ENCODE measurements at regions of chr14 and their contacts with region 1.

Region 1: DNA sequence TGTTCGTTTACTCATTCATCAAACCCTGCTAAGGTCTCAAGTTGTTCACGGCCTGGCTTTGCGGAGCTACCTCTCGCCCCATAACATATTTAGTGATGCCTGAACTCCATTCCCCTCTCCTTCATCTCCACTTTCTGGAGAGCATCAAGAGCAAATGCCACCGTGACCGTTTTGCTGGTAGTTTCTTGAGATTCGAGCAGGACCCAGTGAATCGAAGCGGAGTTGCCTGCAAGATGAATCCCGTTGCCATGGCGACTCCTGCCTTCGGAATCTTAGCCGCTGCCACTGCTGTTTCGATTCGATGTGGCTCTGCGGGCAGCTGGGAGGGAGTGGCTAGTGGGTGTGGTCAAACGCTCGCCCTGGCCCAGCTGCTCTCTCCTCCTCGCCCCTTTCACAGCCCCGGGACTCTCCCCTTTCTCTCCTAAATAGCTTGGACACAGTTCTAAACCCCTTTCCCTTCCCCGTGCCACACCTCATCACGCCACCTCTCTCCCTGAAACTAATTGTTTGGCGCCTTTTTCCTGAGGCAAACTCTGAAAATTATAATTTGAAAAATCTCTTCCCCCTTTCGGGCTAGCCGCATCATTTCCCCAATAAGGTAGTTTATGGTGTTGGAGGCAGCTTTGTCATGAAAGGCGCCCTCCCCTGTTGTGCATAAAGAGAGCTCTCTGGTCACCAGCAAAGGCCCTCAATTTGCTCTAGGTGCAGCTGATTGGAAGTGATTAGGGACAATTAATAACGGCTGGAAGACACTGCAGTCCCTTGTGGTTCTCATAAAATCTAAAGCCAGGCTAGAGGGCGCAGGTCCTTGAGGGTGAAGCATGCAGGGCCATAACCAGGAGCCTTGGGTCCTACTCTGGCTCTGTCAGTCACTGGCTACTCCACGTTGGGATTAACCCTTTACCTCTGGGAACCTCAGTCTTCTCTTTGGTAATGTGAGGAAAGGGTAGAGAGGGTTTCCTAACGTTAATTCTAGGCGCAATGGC is 1.6 kb downstream of the DAAM1 start:
- DNase-seq: peak; percentile 91
- ATAC-seq: peak; percentile 47

Region 2: DNA sequence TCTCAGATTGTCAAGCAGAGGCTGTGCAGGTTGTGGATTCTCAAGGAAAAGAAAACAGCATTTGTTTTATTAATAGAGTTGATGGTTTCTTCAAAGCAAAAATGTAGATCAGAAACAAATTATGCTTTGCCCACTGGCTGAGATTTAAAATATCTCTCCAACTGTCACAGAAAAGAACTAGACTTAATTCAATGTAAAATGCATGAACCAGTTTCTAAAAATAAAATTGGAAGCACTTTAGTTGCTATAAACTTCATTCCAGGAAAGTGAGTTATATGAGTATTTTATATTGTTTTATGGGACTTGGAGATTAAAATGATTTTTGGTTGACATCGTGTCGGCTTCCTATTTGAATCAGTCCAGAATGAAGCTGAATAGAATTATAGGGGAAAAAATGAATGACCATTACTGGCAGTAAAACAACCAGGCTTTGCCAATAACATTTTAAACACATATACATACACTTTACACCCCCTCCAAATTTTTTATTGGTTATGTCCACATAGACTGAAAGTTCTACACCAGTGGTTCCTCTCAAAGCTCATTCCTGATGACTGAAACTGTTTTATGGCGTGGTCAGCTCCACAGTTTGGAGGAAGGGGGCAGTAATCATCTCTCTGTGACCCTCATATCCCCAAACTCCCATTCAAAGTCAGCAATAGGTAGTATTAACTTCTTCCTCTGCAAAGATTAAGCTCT is 57.1 kb before region 1 on chr14:
- intact Hi-C with region 1: loop called (anchors 2 kb)
- DNase-seq: no peak
- ATAC-seq: no peak

Region 3: DNA sequence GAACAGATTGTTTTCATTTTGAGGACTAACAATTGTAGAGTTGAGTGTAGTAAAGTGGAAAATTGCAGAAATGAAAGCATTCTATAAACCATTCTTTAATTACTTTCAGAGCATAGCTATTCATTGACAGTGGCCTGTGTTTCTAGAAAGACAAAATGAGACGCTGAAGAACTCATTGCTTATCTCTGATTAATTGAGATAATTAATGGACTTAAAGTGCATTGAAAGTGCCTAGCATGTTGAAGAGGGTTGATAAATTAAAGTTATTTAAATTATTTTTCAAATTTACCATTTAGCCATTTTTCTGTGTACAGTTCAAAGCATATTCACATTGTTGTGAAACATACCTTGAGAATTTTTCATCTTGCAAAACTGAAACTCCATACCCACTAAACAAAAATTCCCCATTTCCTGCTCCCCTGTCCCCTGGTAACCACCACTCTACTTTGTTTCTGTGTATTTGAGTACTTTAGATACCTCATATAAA is 55.8 kb after region 1 on chr14:
- intact Hi-C with region 1: loop called (anchors 10 kb)
- DNase-seq: no peak
- ATAC-seq: no peak

Region 4: DNA sequence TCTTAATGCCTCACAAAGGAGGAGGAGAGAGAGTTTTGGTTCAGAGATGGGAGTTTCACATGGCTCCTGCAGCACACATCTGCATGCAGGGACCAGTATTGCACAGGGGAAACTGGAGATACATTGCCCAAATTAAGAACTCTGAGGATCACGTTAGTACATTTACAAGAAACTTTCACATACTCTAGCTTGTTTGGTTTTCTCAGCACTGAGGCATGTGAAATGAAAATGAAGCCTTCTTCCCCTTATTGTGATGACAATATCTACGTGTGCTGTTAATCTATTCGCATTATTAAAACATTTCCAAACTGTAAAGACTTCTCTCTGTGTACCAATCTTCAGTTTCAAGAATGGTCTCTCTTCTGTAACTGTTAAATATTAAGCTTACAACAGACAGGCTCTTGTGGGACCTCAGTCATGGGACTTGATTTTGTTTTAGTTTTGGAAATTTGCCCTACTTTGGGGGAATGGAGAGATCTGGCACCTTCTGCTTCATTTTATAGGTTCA is 123.1 kb after region 1 on chr14:
- intact Hi-C with region 1: loop called (anchors 10 kb)
- DNase-seq: no peak
- ATAC-seq: no peak

Measured in Right ventricle myocardium superior (tissue), 1 donor.